Posterior vena cava (tissue), 2 donors: ENCODE measurements at regions of chr5 and their contacts with region 1.

Region 1: DNA sequence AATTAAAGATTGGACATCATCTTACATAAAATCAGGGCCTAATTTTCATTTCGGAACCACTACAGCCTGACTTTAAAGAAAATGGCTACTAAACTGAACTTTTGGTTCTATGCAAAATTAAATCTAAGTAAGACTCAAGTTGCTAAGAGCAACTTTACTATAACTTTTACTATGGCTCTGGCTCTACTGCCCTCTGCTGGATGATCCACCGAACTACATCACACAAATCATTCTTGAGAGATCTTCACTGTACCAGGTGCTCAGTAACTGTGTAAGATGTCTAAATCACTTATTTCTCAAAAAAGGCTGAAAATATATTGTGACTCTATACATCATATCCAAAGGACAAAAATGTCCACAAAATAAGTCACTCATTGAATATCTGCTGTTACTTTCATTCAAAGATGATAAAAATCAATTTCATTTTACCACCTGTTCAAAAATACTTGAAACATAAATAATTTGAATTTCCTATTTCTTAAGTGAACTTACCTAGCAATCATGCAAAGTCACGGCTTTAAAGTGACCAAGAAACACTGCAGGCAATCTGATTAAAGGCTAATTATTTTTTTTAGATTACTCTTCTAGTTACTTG is 13.5 kb downstream of the MOCS2 start:
- DNase-seq: no peak

Region 2: DNA sequence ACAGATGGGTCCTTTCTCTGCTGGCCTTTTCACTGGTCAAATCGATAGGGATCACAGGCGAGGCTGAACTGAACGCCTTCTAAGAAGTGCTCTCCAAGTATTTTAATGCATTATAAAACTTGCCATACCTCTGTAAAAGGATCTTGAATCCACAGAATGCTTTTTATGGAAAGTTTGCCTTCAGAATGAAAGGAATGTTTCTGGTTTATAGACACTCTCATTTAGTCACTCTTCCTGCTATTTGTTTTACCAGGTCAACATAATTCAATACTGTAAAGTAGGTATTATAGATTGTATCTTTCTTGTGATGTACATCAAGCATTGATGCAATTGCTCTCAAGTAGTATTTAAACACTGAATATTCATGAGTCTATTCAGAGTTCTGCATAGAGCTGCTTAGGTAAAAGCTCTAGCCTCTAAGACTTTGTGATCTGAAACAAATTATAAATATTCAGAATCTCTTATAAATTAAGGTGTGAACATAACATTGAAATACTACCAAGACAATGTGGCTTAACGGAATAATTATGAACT is 1404.4 kb before region 1 on chr5:
- intact Hi-C with region 1: no loop called
- DNase-seq: no peak

Region 3: GRCh38 chr5:52950686-52951085 is 145.3 kb before region 1 on chr5:
- intact Hi-C with region 1: loop called (anchors 5 to 10 kb)
- DNase-seq: no peak

Region 4: DNA sequence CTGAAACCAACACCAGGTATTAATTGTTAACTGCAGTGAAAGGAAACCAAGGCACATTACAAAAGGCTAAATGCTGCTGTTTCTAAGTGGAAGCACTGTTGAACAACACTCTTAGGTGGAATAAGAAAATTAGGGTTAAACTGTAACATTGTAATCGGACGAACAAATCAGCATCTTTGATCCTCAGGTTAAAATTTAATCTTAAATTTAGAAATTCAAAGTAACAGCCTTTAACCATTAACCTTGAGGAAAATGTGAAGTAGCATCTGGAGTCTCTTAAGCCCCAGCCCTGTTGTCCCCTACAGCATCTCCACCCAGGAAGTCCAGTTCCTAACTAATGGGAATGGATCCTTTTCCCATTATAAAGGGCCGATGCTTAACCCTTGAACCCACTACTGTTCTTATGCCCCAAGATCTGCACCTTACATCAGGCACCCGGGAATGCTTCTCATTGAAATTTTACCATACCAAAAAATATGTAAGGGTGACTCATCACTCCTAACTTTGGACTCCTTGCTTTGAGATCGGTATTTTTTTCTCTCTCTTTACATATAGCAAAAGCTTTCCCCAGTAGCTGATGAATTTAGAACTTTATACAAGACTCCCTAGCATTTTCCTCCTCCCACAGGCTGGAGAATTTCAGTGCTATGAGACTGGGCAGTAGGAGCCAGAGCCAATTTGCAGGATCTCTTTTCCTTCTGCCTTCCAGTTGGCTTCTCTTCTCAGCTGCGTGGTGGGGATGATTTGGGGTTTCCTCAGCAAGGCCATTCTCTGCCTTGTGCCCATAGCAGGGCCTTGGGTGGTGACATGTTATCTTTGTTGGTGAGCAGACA is 138.9 kb before region 1 on chr5:
- intact Hi-C with region 1: loop called (anchors 5 to 10 kb)
- DNase-seq: no peak

Region 5: DNA sequence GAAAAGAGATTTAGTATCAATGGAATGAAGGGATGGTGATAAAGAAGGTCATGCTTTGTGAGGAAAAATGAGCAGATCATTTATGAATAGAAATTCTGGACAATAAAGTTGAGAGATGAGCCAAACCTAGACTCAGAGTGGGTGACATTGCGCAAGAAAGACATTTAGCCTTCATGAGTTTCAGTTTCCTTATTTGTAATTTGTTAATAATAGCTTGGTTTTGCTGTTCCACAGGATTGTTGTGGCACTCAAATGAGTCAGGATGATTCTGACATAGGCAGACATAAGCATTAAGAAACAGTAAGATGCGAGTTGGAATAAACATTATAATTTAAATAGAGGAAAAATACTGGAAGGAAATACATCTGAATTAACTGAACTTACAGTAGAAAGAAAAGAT is 72.1 kb before region 1 on chr5:
- intact Hi-C with region 1: loop called in 1 of 2 experiments (anchors 2 kb)
- DNase-seq: no peak

Region 6: GRCh38 chr5:53052499-53052898 is 43.5 kb before region 1 on chr5:
- intact Hi-C with region 1: no loop called
- DNase-seq: no peak

Region 7: GRCh38 chr5:53323943-53324642 is 228.1 kb after region 1 on chr5:
- intact Hi-C with region 1: no loop called
- DNase-seq: no peak